ENCODE measurements at regions of chr14 and their contacts with region 1.

Region 1: DNA sequence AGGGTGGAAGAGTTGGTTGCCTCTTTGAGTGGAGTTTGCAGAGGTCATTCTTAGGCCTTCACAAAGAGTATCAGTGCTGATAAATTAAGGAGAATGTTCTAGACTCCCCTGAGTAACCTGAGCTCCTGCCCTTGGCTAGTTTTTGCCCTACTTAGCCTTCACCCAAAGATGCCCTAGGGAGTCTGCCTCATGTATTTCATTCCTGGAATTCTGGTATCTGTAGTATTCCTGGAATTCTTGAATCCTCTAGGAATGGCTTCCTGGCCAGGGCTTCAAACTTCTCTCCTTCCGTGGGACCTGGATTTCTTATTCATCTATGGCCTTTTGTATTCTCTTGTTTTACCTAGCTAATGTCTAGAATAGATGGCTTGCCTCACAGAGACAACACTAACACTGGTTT is 701.1 kb downstream of the NOVA1 start:
- DNase-seq: no peak
- H3K4me3 ChIP-seq: no peak overlapping the region
- H3K27ac ChIP-seq: no peak overlapping the region
- H3K4me1 ChIP-seq: no peaks in the 10 kb centered on the region
- H3K27me3 ChIP-seq: no peaks in the 10 kb centered on the region
- CTCF ChIP-seq: no peak
- POLR2A ChIP-seq: no peak

Region 2: DNA sequence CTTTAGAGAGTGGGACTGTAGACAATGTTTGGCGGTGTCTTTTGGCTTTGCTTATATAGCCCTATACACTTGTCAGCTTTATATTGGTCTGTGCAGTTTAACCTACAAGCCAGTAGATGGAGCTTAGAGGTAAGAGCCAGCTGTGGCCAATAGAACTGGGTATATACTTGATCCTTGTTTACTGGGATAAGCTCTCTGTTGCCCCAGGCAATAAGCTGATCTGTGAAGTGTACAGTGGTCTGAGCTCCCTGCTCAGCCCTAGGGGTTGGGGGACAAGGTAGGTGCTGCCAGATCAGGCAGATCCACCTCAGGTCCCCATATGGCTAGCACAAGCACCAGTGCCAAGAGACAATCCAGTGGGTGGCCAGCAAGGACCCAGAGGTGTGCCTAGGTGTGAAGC is 267.0 kb after region 1 on chr14:
- intact Hi-C with region 1: loop called (anchors 5 kb)
- DNase-seq: no peak
- H3K4me3 ChIP-seq: no peak overlapping the region
- H3K27ac ChIP-seq: no peak overlapping the region
- H3K4me1 ChIP-seq: no peaks in the 10 kb centered on the region
- H3K27me3 ChIP-seq: no peaks in the 10 kb centered on the region
- CTCF ChIP-seq: peak in 1 of 3 donors; percentile 40
- POLR2A ChIP-seq: no peak